ENCODE measurements at regions of chr1 and their contacts with region 1.

Region 1: GRCh38 chr1:241611063-241611462 is 29.1 kb downstream of the CHML start:
- DNase-seq: peak in 3 of 9 experiments; percentile 9 to 76 (median 65)
- ATAC-seq: peak; percentile 90
- H3K4me3 ChIP-seq: no peak overlapping the region
- H3K4me3 Mint-ChIP-seq: no peak overlapping the region
- H3K27ac ChIP-seq: no peak overlapping the region
- H3K27ac Mint-ChIP-seq: no peak overlapping the region
- H3K4me1 ChIP-seq: no peaks in the 10 kb centered on the region
- H3K4me1 Mint-ChIP-seq: no peaks in the 10 kb centered on the region
- H3K27me3 ChIP-seq: no peaks in the 10 kb centered on the region
- H3K27me3 Mint-ChIP-seq: no peaks in the 10 kb centered on the region
- CTCF ChIP-seq: peak; percentile 84

Region 2: DNA sequence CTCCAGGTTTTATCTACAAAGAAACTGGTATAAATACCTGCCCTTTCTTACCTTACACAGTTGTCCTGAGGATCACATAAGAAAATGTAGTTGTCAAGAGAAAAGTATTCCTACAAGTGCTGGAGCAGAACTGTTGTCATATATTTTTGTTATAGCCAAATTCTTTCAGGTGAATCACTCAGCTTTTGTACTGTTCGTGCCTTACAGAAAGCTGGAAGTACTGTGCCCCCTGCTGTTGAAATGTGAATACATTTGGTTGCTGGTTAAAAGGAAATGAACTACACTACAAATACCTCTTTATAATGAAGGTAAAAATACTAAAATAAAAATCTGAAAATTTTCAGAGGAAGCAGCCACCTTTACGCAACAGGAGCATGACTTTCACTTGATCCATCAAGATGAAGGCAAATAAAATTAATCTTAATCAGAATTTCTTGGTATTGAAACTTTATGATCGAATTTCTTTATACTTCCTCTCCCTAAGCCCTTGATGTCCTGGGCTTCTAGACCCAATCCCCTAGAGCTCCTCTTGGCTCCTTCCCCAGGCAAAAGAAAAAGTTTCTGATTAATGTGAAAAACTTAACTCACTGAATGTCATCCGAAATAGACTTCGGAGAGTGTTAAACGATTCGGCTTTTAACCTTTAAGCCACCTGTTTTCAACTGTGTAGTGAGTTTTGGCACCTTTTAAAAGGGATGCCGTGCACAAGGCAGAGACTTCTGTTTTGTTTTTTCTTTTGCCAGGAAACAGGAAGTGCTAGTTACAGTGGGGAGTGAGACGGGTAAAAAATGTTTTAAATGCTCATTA is 16.6 kb after region 1 on chr1:
- CTCF ChIA-PET with region 1: interaction called, 38 read pairs
- POLR2A ChIA-PET with region 1: interaction called, 5 read pairs
- intact Hi-C with region 1: loop called (anchors 1 kb)
- DNase-seq: peak in 6 of 9 experiments; percentile 13 to 81 (median 43)
- ATAC-seq: peak; percentile 77
- H3K4me3 ChIP-seq: peak overlapping the region; percentile 25 to 29
- H3K4me3 Mint-ChIP-seq: peak overlapping the region; percentile 77
- H3K27ac ChIP-seq: peak overlapping the region; percentile 38 to 45
- H3K27ac Mint-ChIP-seq: peak overlapping the region; percentile 92
- H3K4me1 ChIP-seq: peaks cover 4% of the 10 kb centered on the region
- H3K4me1 Mint-ChIP-seq: peaks cover 24% of the 10 kb centered on the region
- H3K27me3 ChIP-seq: no peaks in the 10 kb centered on the region
- H3K27me3 Mint-ChIP-seq: no peaks in the 10 kb centered on the region
- CTCF ChIP-seq: peak; percentile 79

Region 3: DNA sequence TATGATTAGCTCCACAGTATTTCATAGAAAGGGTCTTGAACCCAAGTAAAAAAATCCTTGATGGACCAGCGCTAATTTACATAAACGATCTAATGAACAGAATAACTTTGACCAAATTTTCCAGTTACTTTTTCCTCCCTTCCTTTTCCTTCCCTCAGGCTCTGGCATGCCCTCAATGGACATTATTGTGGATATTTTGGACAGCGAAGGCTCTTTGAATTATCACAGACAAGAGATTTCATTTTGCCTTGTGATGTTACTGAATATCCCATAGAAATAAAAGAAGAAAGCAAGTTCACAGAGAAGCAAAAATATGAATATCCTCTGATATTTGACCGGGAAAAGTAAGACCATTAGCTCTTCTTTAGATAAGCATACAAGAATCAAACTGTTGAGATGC is 176.6 kb after region 1 on chr1:
- CTCF ChIA-PET with region 1: no interaction called
- POLR2A ChIA-PET with region 1: no interaction called
- intact Hi-C with region 1: loop called in 1 of 2 experiments (anchors 5 kb)
- DNase-seq: no peak
- ATAC-seq: no peak
- H3K4me3 ChIP-seq: no peak overlapping the region
- H3K4me3 Mint-ChIP-seq: no peak overlapping the region
- H3K27ac ChIP-seq: no peak overlapping the region
- H3K27ac Mint-ChIP-seq: no peak overlapping the region
- H3K4me1 ChIP-seq: no peaks in the 10 kb centered on the region
- H3K4me1 Mint-ChIP-seq: no peaks in the 10 kb centered on the region
- H3K27me3 ChIP-seq: no peaks in the 10 kb centered on the region
- H3K27me3 Mint-ChIP-seq: peaks cover 3% of the 10 kb centered on the region
- CTCF ChIP-seq: no peak

Region 4: DNA sequence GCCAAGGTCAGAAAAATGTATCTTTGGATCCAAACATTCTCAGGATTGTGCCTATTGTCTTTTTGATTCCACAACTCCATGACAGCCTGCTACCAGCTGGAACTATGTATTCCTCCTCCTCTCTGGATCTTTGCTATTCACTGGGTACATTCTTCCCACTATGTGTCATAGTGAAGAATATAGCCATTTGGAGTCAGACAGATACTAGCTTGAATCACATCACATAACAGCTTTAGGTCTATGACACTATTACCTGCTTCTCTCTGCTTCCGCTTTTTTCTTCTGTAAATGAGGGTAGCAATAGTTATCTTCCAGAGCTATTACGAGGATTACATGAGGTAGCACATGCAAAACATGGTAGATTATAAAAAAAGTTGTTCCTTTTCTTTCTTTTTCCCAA is 231.5 kb after region 1 on chr1:
- CTCF ChIA-PET with region 1: interaction called, 12 read pairs
- POLR2A ChIA-PET with region 1: interaction called, 3 read pairs
- intact Hi-C with region 1: no loop called
- DNase-seq: no peak
- ATAC-seq: no peak
- H3K4me3 ChIP-seq: no peak overlapping the region
- H3K4me3 Mint-ChIP-seq: no peak overlapping the region
- H3K27ac ChIP-seq: no peak overlapping the region
- H3K27ac Mint-ChIP-seq: no peak overlapping the region
- H3K4me1 ChIP-seq: peaks cover 5% of the 10 kb centered on the region
- H3K4me1 Mint-ChIP-seq: peaks cover 6% of the 10 kb centered on the region
- H3K27me3 ChIP-seq: no peaks in the 10 kb centered on the region
- H3K27me3 Mint-ChIP-seq: peaks cover 3% of the 10 kb centered on the region
- CTCF ChIP-seq: no peak

Region 5: DNA sequence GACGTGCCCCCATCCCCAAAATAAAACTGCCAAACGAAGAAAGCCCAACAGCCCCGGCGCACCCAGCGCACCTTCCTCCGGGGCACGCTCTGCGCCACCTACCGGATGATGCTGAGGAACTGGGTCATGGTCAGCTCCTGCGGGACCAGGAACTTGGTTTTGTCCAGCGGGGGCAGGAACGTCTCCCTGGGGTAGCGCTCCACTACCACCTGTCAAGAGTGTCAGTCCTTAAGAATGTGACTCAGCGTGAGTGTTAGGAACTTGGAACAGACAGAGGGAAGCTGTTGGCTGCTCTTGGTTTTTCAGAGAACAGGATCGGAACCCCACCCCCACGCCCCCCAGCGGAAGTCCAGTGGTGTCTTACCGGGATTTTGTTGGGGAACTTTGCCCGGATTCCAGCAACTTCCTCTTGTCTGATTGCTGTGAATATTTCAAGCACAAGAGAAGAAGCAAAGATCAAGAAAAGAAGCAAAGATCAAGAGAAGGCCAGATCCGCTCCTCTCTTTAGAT is 387.4 kb after region 1 on chr1:
- CTCF ChIA-PET with region 1: interaction called, 46 read pairs
- POLR2A ChIA-PET with region 1: no interaction called
- intact Hi-C with region 1: loop called (anchors 1 to 5 kb)
- DNase-seq: peak; percentile 1 to 67 (median 37)
- ATAC-seq: no peak
- H3K4me3 ChIP-seq: peak overlapping the region in 1 of 2 experiments; percentile 13
- H3K4me3 Mint-ChIP-seq: peak overlapping the region; percentile 49
- H3K27ac ChIP-seq: no peak overlapping the region
- H3K27ac Mint-ChIP-seq: no peak overlapping the region
- H3K4me1 ChIP-seq: no peaks in the 10 kb centered on the region
- H3K4me1 Mint-ChIP-seq: no peaks in the 10 kb centered on the region
- H3K27me3 ChIP-seq: no peaks in the 10 kb centered on the region
- H3K27me3 Mint-ChIP-seq: peaks cover 12% of the 10 kb centered on the region
- CTCF ChIP-seq: peak; percentile 57

Region 6: DNA sequence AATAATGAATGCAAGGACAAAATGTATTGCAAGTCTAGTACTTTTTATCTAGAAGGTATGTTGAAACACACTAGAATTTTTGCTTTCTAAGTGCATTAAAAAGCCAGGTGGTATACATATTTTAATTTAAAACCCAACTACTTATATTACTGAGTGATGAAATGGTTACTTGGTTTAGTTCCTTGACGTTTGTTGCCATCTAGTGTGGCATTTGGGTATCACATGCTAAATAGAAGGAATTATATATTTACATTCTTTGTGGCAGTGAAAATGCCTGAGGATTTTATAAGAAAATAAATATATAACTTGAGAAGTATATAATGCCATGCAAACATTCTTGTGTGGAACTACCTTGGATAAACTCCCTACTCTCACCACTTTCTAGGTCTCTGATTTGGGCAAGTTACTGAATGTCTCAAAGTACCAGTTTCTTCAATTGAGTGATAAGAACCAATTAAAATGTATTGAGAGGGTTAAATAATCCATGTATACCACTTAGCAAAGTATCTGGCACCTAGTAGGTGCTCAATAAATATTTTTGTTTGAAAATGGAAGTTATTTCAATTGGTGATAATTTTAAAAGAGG is 1714.3 kb after region 1 on chr1:
- CTCF ChIA-PET with region 1: no interaction called
- POLR2A ChIA-PET with region 1: no interaction called
- intact Hi-C with region 1: loop called (anchors 1 to 10 kb)
- DNase-seq: peak in 3 of 9 experiments; percentile 34 to 64 (median 55)
- ATAC-seq: peak; percentile 51
- H3K4me3 ChIP-seq: no peak overlapping the region
- H3K4me3 Mint-ChIP-seq: no peak overlapping the region
- H3K27ac ChIP-seq: no peak overlapping the region
- H3K27ac Mint-ChIP-seq: no peak overlapping the region
- H3K4me1 ChIP-seq: no peaks in the 10 kb centered on the region
- H3K4me1 Mint-ChIP-seq: no peaks in the 10 kb centered on the region
- H3K27me3 ChIP-seq: no peaks in the 10 kb centered on the region
- H3K27me3 Mint-ChIP-seq: no peaks in the 10 kb centered on the region
- CTCF ChIP-seq: peak; percentile 91